ENCODE measurements at regions of chr7 and their contacts with region 1.

Region 1: GRCh38 chr7:52525772-52526341 is 509.6 kb upstream of the POM121L12 start:
- DNase-seq: no peak
- ATAC-seq: no peak
- H3K4me3 ChIP-seq: no peak overlapping the region
- H3K27ac ChIP-seq: no peak overlapping the region
- H3K4me1 ChIP-seq: no peaks in the 10 kb centered on the region
- H3K27me3 ChIP-seq: no peaks in the 10 kb centered on the region
- CTCF ChIP-seq: no peak

Region 2: GRCh38 chr7:52475001-52475582 is 50.8 kb before region 1 on chr7:
- intact Hi-C with region 1: loop called in 1 of 2 experiments (anchors 5 kb)
- DNase-seq: no peak
- ATAC-seq: no peak
- H3K4me3 ChIP-seq: no peak overlapping the region
- H3K27ac ChIP-seq: no peak overlapping the region
- H3K4me1 ChIP-seq: no peaks in the 10 kb centered on the region
- H3K27me3 ChIP-seq: no peaks in the 10 kb centered on the region
- CTCF ChIP-seq: no peak

Region 3: GRCh38 chr7:53252539-53252938 is 726.7 kb after region 1 on chr7:
- intact Hi-C with region 1: no loop called
- DNase-seq: no peak
- ATAC-seq: no peak
- H3K4me3 ChIP-seq: no peak overlapping the region
- H3K27ac ChIP-seq: no peak overlapping the region
- H3K4me1 ChIP-seq: no peaks in the 10 kb centered on the region
- H3K27me3 ChIP-seq: no peaks in the 10 kb centered on the region
- CTCF ChIP-seq: no peak